ENCODE measurements at regions of chr3 and their contacts with region 1.

Region 1: GRCh38 chr3:32106280-32106928 is at the start of gene GPD1L:
- DNase-seq: peak; percentile 75 to 96 (median 86)
- ATAC-seq: peak; percentile 99
- H3K4me3 ChIP-seq: peak within 1 kb of the TSS; percentile 77
- H3K4me3 Mint-ChIP-seq: peak within 1 kb of the TSS; percentile 86 to 97 (median 94)
- H3K27ac ChIP-seq: peak within 1 kb of the TSS; percentile 68
- H3K27ac Mint-ChIP-seq: peak within 1 kb of the TSS; percentile 77 to 96 (median 82)
- H3K4me1 ChIP-seq: peaks cover 14 to 15% of the 10 kb centered on the region in 2 donors
- H3K4me1 Mint-ChIP-seq: peaks cover 14 to 44% (median 39%) of the 10 kb centered on the region in 7 donors
- H3K27me3 ChIP-seq: no peaks in the 10 kb centered on the region
- H3K27me3 Mint-ChIP-seq: no peaks in the 10 kb centered on the region
- total RNA-seq, gene GPD1L: 14.1 to 23.8 (median 21.4) TPM

Region 2: DNA sequence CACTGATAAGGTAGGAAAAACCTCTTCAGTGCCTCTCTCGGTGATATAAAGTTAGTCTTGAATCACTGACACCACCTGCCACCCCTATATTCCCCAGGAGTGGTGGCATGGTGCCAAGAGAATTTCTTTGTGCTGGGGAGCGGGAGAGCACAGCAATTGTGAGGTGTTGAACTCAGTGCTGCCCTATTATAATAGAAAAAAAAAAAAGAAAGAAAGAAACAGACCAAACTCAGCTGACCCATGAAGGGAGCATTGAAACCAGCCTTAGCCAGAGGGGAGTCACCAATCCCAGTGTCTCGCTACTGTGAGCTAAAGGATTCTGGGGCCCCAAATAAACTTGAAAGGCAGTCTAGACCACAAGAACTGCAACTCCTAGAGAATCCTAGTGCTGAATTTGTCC is 775.1 kb before region 1 on chr3:
- CTCF ChIA-PET with region 1: no interaction called
- POLR2A ChIA-PET with region 1: no interaction called
- intact Hi-C with region 1: no loop called
- DNase-seq: no peak
- ATAC-seq: no peak
- H3K4me3 ChIP-seq: no peak overlapping the region
- H3K4me3 Mint-ChIP-seq: no peak overlapping the region
- H3K27ac ChIP-seq: no peak overlapping the region
- H3K27ac Mint-ChIP-seq: no peak overlapping the region
- H3K4me1 ChIP-seq: no peaks in the 10 kb centered on the region
- H3K4me1 Mint-ChIP-seq: peaks cover 0 to 3% (median 0%) of the 10 kb centered on the region in 7 donors
- H3K27me3 ChIP-seq: no peaks in the 10 kb centered on the region
- H3K27me3 Mint-ChIP-seq: no peaks in the 10 kb centered on the region

Region 3: GRCh38 chr3:31462050-31462569 is 644.3 kb before region 1 on chr3:
- CTCF ChIA-PET with region 1: no interaction called
- POLR2A ChIA-PET with region 1: no interaction called
- intact Hi-C with region 1: loop called in 1 of 2 experiments (anchors 2 kb)
- DNase-seq: peak in 7 of 9 donors; percentile 78 to 93 (median 86)
- ATAC-seq: peak; percentile 93
- H3K4me3 ChIP-seq: peak overlapping the region; percentile 49
- H3K4me3 Mint-ChIP-seq: peak overlapping the region; percentile 28 to 95 (median 78)
- H3K27ac ChIP-seq: peak overlapping the region; percentile 68
- H3K27ac Mint-ChIP-seq: peak overlapping the region; percentile 70 to 100 (median 96)
- H3K4me1 ChIP-seq: peaks cover 49 to 59% of the 10 kb centered on the region in 2 donors
- H3K4me1 Mint-ChIP-seq: peaks cover 14 to 79% (median 68%) of the 10 kb centered on the region in 7 donors
- H3K27me3 ChIP-seq: no peaks in the 10 kb centered on the region
- H3K27me3 Mint-ChIP-seq: no peaks in the 10 kb centered on the region

Region 4: DNA sequence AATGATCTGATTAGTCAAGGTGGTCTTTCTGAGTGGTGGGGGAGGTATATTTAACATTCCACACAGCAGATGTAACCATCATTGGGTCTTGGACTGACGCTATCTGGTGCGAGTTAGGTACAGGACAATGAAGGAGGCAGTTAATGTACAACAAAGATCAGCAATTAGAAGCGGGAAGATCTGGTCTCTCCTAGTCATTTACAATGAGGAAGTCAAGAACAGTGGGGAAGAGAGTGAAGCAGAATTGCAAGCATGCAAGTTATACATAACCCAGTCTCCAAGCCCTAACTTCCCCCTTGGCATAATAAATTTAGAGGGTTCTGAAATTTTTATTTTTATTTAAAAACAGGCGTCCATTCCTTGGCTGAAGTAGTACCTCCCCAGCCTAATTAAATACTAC is 14.1 kb after region 1 on chr3:
- CTCF ChIA-PET with region 1: interaction called, 3 read pairs
- POLR2A ChIA-PET with region 1: interaction called, 13 read pairs
- intact Hi-C with region 1: loop called in 1 of 2 experiments (anchors 1 kb)
- DNase-seq: no peak
- ATAC-seq: peak; percentile 67
- H3K4me3 ChIP-seq: no peak overlapping the region
- H3K4me3 Mint-ChIP-seq: no peak overlapping the region
- H3K27ac ChIP-seq: no peak overlapping the region
- H3K27ac Mint-ChIP-seq: no peak overlapping the region
- H3K4me1 ChIP-seq: peaks cover 4 to 23% of the 10 kb centered on the region in 2 donors
- H3K4me1 Mint-ChIP-seq: peaks cover 21 to 62% (median 53%) of the 10 kb centered on the region in 7 donors
- H3K27me3 ChIP-seq: no peaks in the 10 kb centered on the region
- H3K27me3 Mint-ChIP-seq: no peaks in the 10 kb centered on the region

Region 5: GRCh38 chr3:32143849-32144757 is 37.7 kb after region 1 on chr3:
- CTCF ChIA-PET with region 1: interaction called, 7 read pairs
- POLR2A ChIA-PET with region 1: interaction called, 3 read pairs
- intact Hi-C with region 1: loop called in 1 of 2 experiments (anchors 1 kb)
- DNase-seq: peak in 8 of 9 donors; percentile 30 to 70 (median 60)
- ATAC-seq: peak; percentile 75
- H3K4me3 ChIP-seq: no peak overlapping the region
- H3K4me3 Mint-ChIP-seq: no peak overlapping the region
- H3K27ac ChIP-seq: no peak overlapping the region
- H3K27ac Mint-ChIP-seq: peak overlapping the region in 1 of 9 donors; percentile 21
- H3K4me1 ChIP-seq: no peaks in the 10 kb centered on the region
- H3K4me1 Mint-ChIP-seq: peaks cover 0 to 25% (median 6%) of the 10 kb centered on the region in 7 donors
- H3K27me3 ChIP-seq: no peaks in the 10 kb centered on the region
- H3K27me3 Mint-ChIP-seq: no peaks in the 10 kb centered on the region

Region 6: DNA sequence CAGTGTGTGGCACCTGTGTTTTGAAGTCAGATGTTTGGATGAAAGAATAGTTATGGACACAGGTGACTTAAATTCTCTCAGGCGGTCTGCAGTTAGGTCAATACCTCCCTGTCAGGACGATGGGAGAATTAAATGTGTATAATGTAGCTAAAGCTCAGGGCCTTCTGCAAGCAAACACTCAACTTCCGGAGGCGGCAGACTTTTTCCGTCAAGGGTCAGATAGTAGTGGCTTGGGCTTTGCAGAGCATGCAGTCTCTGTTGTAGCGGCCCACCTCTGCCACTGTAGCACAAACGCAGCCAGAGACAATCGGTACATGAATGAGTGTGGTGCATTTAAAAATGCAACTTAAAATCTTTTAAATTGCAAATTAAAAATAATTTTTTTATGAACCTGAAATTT is 179.5 kb after region 1 on chr3:
- CTCF ChIA-PET with region 1: no interaction called
- POLR2A ChIA-PET with region 1: no interaction called
- intact Hi-C with region 1: loop called in 1 of 2 experiments (anchors 2 kb)
- DNase-seq: no peak
- ATAC-seq: peak; percentile 11
- H3K4me3 ChIP-seq: no peak overlapping the region
- H3K4me3 Mint-ChIP-seq: peak overlapping the region in 8 of 10 donors; percentile 22 to 73 (median 56)
- H3K27ac ChIP-seq: peak overlapping the region; percentile 45
- H3K27ac Mint-ChIP-seq: peak overlapping the region; percentile 72 to 94 (median 78)
- H3K4me1 ChIP-seq: peaks cover 0 to 12% of the 10 kb centered on the region in 2 donors
- H3K4me1 Mint-ChIP-seq: peaks cover 19 to 65% (median 38%) of the 10 kb centered on the region in 7 donors
- H3K27me3 ChIP-seq: no peaks in the 10 kb centered on the region
- H3K27me3 Mint-ChIP-seq: no peaks in the 10 kb centered on the region

Region 7: DNA sequence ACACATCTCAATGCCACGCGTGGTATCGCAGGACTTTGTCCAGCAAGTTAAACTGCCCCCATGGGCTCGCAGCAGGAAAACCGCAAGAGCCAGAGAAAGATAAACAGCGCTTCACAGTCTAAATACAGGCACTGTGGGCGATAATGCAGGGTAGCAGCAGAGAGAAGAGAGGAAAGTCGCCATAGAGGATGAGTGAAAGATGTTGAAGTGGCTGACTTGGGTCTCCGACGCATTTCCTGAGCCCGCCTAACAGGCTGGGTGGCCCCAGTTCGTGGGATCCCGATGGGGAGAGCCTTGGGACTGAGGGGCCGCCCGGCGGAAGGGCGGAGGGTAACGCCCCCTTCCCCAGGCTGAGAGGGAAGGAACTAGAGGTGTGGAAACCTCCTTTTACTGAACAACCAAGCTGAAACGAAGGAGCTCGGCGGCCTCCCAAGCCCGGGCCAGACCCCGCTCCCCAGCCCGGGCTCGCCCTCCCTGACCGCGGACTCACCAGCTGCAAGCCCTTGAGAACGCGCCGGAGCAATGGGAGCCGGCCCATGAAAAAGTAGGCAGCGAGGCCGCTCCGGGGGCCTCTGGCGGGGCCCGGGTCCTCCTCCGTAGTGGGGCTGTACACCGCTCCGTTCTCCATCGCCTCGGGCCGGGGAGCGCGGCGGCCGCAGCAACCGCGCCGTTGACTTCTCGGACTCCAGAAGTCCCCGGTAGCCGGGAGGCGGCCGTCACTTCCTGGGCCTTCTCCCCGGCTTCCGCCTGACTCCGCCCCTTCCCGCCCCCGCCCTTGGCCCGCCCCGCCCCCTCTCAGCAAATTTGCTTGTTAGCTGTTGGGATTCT is 395.9 kb after region 1 on chr3 and contains the start of gene CMTM6:
- CTCF ChIA-PET with region 1: no interaction called
- POLR2A ChIA-PET with region 1: no interaction called
- intact Hi-C with region 1: loop called (anchors 2 to 5 kb)
- DNase-seq: peak; percentile 49 to 77 (median 70)
- ATAC-seq: peak; percentile 92
- H3K4me3 ChIP-seq: peak within 1 kb of the TSS; percentile 89
- H3K4me3 Mint-ChIP-seq: peak within 1 kb of the TSS; percentile 79 to 97 (median 93)
- H3K27ac ChIP-seq: peak within 1 kb of the TSS; percentile 98
- H3K27ac Mint-ChIP-seq: peak within 1 kb of the TSS; percentile 86 to 98 (median 90)
- H3K4me1 ChIP-seq: peaks cover 6 to 23% of the 10 kb centered on the region in 2 donors
- H3K4me1 Mint-ChIP-seq: peaks cover 28 to 48% (median 43%) of the 10 kb centered on the region in 7 donors
- H3K27me3 ChIP-seq: no peaks in the 10 kb centered on the region
- H3K27me3 Mint-ChIP-seq: peaks cover 0 to 4% (median 0%) of the 10 kb centered on the region in 5 donors
- total RNA-seq, gene CMTM6: 24.1 to 61.1 (median 38.1) TPM

Region 8: DNA sequence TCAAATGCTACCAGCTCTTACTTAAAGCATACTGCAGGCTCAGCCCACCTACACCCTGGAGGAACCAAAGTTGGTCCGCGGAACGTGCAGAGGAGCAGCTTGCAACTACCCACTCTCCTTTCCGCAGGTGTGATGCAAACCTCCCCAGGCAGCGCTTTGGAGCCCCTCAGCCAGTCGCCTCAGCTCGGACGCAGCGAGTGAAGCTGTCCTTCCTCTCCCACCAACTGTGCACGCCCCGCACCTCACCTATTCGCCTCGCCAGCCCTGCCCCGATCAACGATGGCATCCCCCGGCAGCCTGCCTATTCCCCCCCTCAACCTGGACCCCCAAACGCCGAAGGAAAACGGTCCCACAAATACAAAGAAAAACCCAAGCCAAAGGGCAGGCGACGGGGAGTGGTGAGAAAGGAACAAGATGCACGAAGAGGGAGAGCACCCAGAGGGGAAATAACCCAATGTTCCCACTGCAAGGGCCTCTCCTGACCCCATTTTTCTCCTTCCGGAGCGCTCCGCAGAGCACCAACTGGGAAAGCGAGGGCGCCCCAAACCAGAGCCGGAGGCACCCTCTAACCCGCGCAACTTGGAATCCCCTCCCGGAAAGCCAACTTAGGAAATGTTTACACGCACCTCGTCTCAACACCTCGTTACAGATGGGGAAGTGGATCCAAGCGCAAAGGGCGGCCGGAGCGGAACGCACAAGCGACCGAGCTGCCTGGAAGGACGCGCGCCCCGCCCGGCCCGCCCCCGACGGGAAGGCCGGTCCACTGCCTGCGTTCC is 989.9 kb after region 1 on chr3:
- CTCF ChIA-PET with region 1: no interaction called
- POLR2A ChIA-PET with region 1: no interaction called
- intact Hi-C with region 1: loop called in 1 of 2 experiments (anchors 5 kb)
- DNase-seq: peak in 8 of 9 donors; percentile 23 to 52 (median 39)
- ATAC-seq: peak; percentile 71
- H3K4me3 ChIP-seq: peak overlapping the region; percentile 90
- H3K4me3 Mint-ChIP-seq: peak overlapping the region; percentile 90 to 98 (median 94)
- H3K27ac ChIP-seq: peak overlapping the region; percentile 71
- H3K27ac Mint-ChIP-seq: peak overlapping the region; percentile 66 to 87 (median 80)
- H3K4me1 ChIP-seq: peaks cover 0 to 17% of the 10 kb centered on the region in 2 donors
- H3K4me1 Mint-ChIP-seq: peaks cover 24 to 45% (median 37%) of the 10 kb centered on the region in 7 donors
- H3K27me3 ChIP-seq: no peaks in the 10 kb centered on the region
- H3K27me3 Mint-ChIP-seq: peaks cover 0 to 4% (median 0%) of the 10 kb centered on the region in 5 donors

Measured in naive thymus-derived CD4-positive, alpha-beta T cell (primary cell).